H1 (cell line): ENCODE measurements at regions of chr2 and their contacts with region 1.

Region 1: DNA sequence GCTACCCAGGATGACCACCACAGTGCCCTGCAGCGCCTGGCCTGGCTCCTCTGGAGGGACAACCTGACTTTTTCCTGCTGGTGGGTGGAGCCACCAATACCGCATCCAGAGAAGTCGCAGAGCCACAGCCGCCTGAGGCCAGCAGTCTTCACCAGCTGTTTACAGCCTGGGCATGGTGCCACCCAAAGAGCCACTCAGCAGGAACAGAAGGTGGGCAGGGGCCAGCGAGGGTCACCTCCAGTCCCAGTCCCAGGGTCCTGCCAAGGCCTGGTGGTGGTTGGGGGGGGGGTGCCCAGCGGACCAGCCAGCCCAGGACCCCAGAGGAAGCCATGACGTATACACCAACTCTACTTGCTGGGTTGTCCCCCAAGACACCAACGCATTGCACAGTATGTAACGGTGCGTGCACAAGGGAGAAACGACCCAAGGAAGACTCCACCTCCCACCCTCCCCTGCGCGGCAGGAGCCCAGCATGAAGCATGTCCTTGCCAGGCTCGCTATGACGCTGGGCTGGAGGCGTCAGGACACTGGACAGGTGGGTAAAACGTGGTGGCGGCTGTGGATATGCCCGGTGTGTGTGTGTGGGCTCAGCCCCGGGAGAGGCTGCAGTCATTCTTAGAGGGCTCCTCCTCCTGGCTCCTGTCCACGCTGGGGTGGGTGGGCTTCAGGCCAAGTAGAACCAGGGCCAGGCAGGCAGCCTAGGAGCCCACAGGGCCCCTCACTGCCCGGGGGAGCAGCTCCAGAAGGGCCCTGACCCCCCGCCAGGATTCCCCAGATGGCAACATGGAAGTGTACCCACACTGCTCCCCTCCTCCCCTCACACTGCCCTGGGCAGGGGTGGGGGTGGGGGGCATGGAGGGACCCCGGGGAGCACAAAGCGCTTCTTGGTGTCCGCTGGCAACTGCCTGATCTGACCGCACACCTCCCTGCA is 49.3 kb downstream of the HS6ST1 start:
- DNase-seq: peak in 1 of 2 experiments; percentile 37
- H3K4me3 ChIP-seq: no peak overlapping the region
- H3K27ac ChIP-seq: no peak overlapping the region
- H3K4me1 ChIP-seq: no peaks in the 10 kb centered on the region; a peak in 1 of 7 replicates
- H3K27me3 ChIP-seq: peaks cover 0 to 3% (median under 1%) of the 10 kb centered on the region in 4 experiments; a peak in 1 of 7 replicates
- CTCF ChIP-seq: no peak
- EP300 ChIP-seq: no peak
- POLR2A ChIP-seq: no peak
- RAD21 ChIP-seq: no peak

Region 2: GRCh38 chr2:128219891-128220290 is 49.4 kb before region 1 on chr2:
- CTCF ChIA-PET with region 1: no interaction called
- POLR2A ChIA-PET with region 1: no interaction called
- DNase-seq: no peak
- H3K4me3 ChIP-seq: no peak overlapping the region
- H3K27ac ChIP-seq: no peak overlapping the region
- H3K4me1 ChIP-seq: no peaks in the 10 kb centered on the region
- H3K27me3 ChIP-seq: no peaks in the 10 kb centered on the region
- CTCF ChIP-seq: no peak
- EP300 ChIP-seq: no peak
- POLR2A ChIP-seq: no peak
- RAD21 ChIP-seq: no peak

Region 3: GRCh38 chr2:128282976-128283810 is 13.9 kb after region 1 on chr2:
- CTCF ChIA-PET with region 1: interaction called, 16 read pairs
- POLR2A ChIA-PET with region 1: interaction called, 4 read pairs
- DNase-seq: no peak
- H3K4me3 ChIP-seq: no peak overlapping the region
- H3K27ac ChIP-seq: no peak overlapping the region
- H3K4me1 ChIP-seq: peaks cover 0 to 28% (median 16%) of the 10 kb centered on the region in 4 experiments; a peak in 5 of 7 replicates
- H3K27me3 ChIP-seq: no peaks in the 10 kb centered on the region
- CTCF ChIP-seq: no peak
- EP300 ChIP-seq: no peak
- POLR2A ChIP-seq: no peak
- RAD21 ChIP-seq: no peak

Region 4: GRCh38 chr2:128298846-128299507 is 29.6 kb after region 1 on chr2:
- CTCF ChIA-PET with region 1: no interaction called
- POLR2A ChIA-PET with region 1: no interaction called
- DNase-seq: no peak
- H3K4me3 ChIP-seq: no peak overlapping the region
- H3K27ac ChIP-seq: no peak overlapping the region
- H3K4me1 ChIP-seq: peaks cover 0 to 21% (median 0%) of the 10 kb centered on the region in 4 experiments; a peak in 4 of 7 replicates
- H3K27me3 ChIP-seq: no peaks in the 10 kb centered on the region
- CTCF ChIP-seq: no peak
- EP300 ChIP-seq: no peak
- POLR2A ChIP-seq: no peak
- RAD21 ChIP-seq: no peak

Region 5: DNA sequence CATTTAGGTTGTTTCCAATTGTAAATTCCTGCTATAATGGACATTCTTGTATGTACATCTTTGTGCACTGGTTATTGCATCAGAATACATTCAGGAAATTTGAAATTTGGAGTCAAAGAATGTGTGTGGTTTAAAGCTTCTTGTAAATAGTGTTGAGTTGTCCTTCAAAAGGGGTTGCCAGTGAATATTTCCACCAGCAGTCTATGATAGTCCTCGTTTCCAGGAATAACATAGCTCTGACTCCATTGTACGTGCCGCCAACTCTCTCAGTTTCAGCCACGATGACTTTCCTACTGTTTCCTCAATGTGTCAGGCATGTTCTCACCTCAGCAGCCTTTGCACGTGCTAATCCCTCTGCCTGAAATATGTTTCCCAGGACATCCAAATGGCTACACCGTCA is 60.3 kb after region 1 on chr2:
- CTCF ChIA-PET with region 1: no interaction called
- POLR2A ChIA-PET with region 1: no interaction called
- DNase-seq: no peak
- H3K4me3 ChIP-seq: no peak overlapping the region
- H3K27ac ChIP-seq: no peak overlapping the region
- H3K4me1 ChIP-seq: no peaks in the 10 kb centered on the region; a peak in 1 of 7 replicates
- H3K27me3 ChIP-seq: no peaks in the 10 kb centered on the region
- CTCF ChIP-seq: no peak
- EP300 ChIP-seq: no peak
- POLR2A ChIP-seq: no peak
- RAD21 ChIP-seq: no peak

Region 6: DNA sequence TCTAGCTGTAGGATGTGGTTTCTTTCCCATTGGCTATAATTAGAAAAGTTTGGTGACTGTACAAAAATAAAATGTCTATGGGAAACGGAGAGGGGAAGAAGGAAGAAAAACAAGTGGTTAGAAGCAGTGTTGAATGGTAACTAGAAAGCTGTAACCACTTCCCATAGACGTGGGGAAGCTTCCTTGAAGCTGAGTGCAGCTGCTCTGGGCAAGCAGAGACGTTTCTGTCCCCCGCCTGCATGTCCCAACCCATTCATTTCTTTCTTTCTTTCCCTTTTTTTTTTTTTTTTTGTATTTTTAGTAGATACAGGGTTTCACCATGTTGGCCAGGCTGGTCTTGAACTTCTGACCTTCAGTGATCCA is 417.1 kb after region 1 on chr2:
- CTCF ChIA-PET with region 1: no interaction called
- POLR2A ChIA-PET with region 1: no interaction called
- DNase-seq: no peak
- H3K4me3 ChIP-seq: no peak overlapping the region
- H3K27ac ChIP-seq: no peak overlapping the region
- H3K4me1 ChIP-seq: peaks cover 0 to 6% (median 2%) of the 10 kb centered on the region in 4 experiments; a peak in 2 of 7 replicates
- H3K27me3 ChIP-seq: no peaks in the 10 kb centered on the region
- CTCF ChIP-seq: no peak
- EP300 ChIP-seq: no peak
- POLR2A ChIP-seq: no peak
- RAD21 ChIP-seq: no peak